BJ (cell line): ENCODE measurements at regions of chr17 and their contacts with region 1.

Region 1: GRCh38 chr17:45948881-45949624 is 50.0 kb upstream of the STH start:
- DNase-seq: peak; percentile 4
- H3K4me3 ChIP-seq: no peak overlapping the region
- H3K27me3 ChIP-seq: peaks cover 7% of the 10 kb centered on the region
- CTCF ChIP-seq: peak; percentile 76

Region 2: DNA sequence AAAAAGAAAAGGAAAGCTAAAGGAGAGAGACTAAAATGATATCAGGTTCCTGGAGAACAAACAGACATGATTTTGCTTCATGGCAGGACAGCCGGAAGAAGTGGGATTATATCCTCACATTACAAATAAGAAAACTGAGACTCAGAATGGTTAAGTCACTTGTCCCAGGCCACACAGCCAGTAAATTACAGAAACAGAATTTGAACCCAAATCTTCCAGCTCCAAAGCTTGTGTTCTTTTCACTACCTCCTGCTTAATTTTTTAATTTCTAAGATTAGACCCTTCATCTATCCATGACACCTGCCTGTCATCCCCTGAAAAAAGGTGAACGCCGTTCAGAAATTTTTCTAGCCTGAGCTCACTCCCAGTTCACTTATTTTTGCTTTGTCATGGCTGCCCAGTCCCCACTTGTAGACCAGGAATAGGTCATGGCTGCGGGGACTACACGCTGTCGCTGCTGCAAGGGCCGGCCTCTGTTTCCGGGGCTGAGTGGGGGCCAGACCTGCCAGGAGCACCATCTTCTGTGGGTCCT is 18.6 kb before region 1 on chr17:
- CTCF ChIA-PET with region 1: interaction called, 10 read pairs
- POLR2A ChIA-PET with region 1: no interaction called
- DNase-seq: no peak
- H3K4me3 ChIP-seq: no peak overlapping the region
- H3K27me3 ChIP-seq: peaks cover 3% of the 10 kb centered on the region; the same call in 1 of the 2 replicates
- CTCF ChIP-seq: no peak

Region 3: GRCh38 chr17:45936610-45937009 is 12.4 kb before region 1 on chr17:
- CTCF ChIA-PET with region 1: interaction called, 19 read pairs
- POLR2A ChIA-PET with region 1: no interaction called
- DNase-seq: no peak
- H3K4me3 ChIP-seq: no peak overlapping the region
- H3K27me3 ChIP-seq: peaks cover 8% of the 10 kb centered on the region
- CTCF ChIP-seq: no peak

Region 4: GRCh38 chr17:45967378-45967777 is 18.3 kb after region 1 on chr17:
- CTCF ChIA-PET with region 1: no interaction called
- POLR2A ChIA-PET with region 1: no interaction called
- DNase-seq: no peak
- H3K4me3 ChIP-seq: no peak overlapping the region
- H3K27me3 ChIP-seq: peaks cover 8% of the 10 kb centered on the region
- CTCF ChIP-seq: no peak

Region 5: GRCh38 chr17:46167826-46168569 is 218.9 kb after region 1 on chr17:
- CTCF ChIA-PET with region 1: no interaction called
- POLR2A ChIA-PET with region 1: no interaction called
- DNase-seq: peak; percentile 92
- H3K4me3 ChIP-seq: no peak overlapping the region
- H3K27me3 ChIP-seq: no peaks in the 10 kb centered on the region
- CTCF ChIP-seq: no peak